Gastrocnemius medialis (tissue), 4 donors: ENCODE measurements at regions of chr15 and their contacts with region 1.

Region 1: GRCh38 chr15:75201609-75202250 is at the start of gene C15orf39:
- DNase-seq: peak; percentile 23 to 41
- ATAC-seq: peak; percentile 76 to 77
- H3K4me3 ChIP-seq: peak within 1 kb of the TSS; percentile 78 to 92 (median 83)
- H3K27ac ChIP-seq: peak within 1 kb of the TSS; percentile 82 to 87 (median 83)
- H3K4me1 ChIP-seq: peaks cover 7 to 16% of the 10 kb centered on the region in 2 donors
- H3K27me3 ChIP-seq: no peaks in the 10 kb centered on the region
- CTCF ChIP-seq: peak in 4 of 5 experiments; percentile 94 to 99 (median 96)
- POLR2A ChIP-seq: peak; percentile 87 to 92
- total RNA-seq, gene C15orf39: 1.6 to 3.8 (median 2.6) TPM

Region 2: GRCh38 chr15:74635228-74635627 is 566.5 kb before region 1 on chr15:
- in situ Hi-C with region 1: no loop called
- intact Hi-C with region 1: loop called (anchors 10 kb)
- DNase-seq: peak in 1 of 2 donors; percentile 51
- ATAC-seq: peak; percentile 64 to 73
- H3K4me3 ChIP-seq: no peak overlapping the region
- H3K27ac ChIP-seq: no peak overlapping the region
- H3K4me1 ChIP-seq: peaks cover 0 to 4% of the 10 kb centered on the region in 2 donors
- H3K27me3 ChIP-seq: no peaks in the 10 kb centered on the region
- CTCF ChIP-seq: peak; percentile 83 to 89 (median 85)
- POLR2A ChIP-seq: no peak

Region 3: GRCh38 chr15:74956648-74957300 is 245.0 kb before region 1 on chr15 and contains the start of gene RPP25:
- in situ Hi-C with region 1: no loop called
- intact Hi-C with region 1: loop called (anchors 1 kb)
- DNase-seq: peak; percentile 44 to 53
- ATAC-seq: peak; percentile 83 to 87
- H3K4me3 ChIP-seq: peak within 1 kb of the TSS; percentile 58 to 76 (median 68)
- H3K27ac ChIP-seq: peak within 1 kb of the TSS; percentile 67 to 74 (median 72)
- H3K4me1 ChIP-seq: peaks cover 15 to 25% of the 10 kb centered on the region in 2 donors
- H3K27me3 ChIP-seq: peaks cover 46 to 50% (median 49%) of the 10 kb centered on the region in 3 donors
- CTCF ChIP-seq: no peak
- POLR2A ChIP-seq: peak; percentile 54 to 75
- total RNA-seq, gene RPP25: 1.0 to 5.1 (median 1.9) TPM

Region 4: DNA sequence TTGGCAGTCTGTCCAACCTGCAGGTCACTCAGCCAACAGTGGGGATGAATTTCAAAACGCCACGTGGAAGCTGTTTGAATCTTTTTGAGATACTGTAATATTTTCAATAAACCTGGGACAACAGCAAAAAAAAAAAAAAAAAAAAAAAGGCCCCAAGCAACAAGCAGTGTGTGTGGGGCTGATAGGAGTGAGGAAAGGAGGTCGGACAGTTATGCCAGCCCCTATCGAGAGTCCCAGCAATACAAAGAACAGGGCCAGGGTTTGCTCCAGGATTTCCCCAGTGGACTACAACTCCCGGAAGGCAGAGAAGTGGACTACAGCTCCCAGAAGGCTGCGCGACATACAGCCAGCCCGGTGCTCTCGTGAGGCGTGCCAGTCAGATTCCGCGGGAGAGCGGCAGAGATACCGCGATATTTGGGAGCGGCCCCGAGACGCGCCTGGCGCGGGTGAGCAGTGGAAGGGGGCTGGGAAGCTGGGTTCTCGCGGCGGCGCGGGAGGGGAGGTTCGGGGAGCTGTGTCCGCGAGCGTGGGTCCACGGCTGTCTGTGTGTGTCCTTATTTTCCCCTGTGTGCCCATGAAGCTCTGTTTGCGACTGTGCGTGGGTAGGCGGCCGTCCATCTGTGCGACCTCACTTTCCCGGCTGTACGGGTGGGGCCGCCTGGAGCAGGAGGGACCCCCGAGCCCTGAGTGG is 178.4 kb before region 1 on chr15 and contains the start of gene PPCDC:
- in situ Hi-C with region 1: loop called (anchors 5 to 10 kb)
- intact Hi-C with region 1: no loop called
- DNase-seq: peak; percentile 95
- ATAC-seq: peak; percentile 97 to 98
- H3K4me3 ChIP-seq: peak within 1 kb of the TSS; percentile 80 to 92 (median 84)
- H3K27ac ChIP-seq: peak within 1 kb of the TSS; percentile 88 to 96 (median 90)
- H3K4me1 ChIP-seq: peaks cover 0 to 14% of the 10 kb centered on the region in 2 donors
- H3K27me3 ChIP-seq: no peaks in the 10 kb centered on the region
- CTCF ChIP-seq: no peak
- POLR2A ChIP-seq: peak; percentile 82 to 87
- total RNA-seq, gene PPCDC: 5.5 to 20.2 (median 11.9) TPM

Region 5: DNA sequence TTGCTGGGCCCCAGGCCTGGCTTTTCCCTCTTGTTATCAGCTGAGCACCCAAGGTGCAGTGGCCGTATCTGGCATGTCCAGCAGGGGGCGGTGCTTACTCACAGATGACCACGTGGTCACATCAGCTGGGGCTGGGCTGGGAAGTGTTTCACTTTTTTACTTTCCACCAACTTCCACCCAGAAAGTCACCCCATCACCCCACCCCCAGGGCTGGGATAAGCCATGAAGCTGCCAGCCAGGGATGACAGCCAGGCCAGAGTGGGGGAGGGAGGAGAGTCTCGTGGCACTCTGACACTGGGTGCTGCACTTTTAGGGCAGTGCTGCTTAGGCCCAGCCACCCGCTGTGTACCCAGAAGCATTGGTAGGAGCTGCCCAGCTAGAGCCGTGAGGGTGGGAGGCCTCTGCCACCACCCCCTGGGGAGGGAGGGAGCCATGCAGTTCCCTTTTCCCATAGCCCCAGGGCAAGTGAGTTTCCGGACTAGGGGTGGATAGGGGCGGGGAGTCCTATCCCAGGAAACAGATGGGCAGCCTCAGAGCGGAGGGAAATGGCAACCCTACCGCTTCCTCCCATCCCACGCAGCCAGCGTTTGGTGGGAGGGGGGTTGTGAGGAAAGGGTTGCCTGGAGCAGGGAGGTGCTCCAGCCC is 172.2 kb before region 1 on chr15:
- in situ Hi-C with region 1: loop called (anchors 5 to 10 kb)
- intact Hi-C with region 1: loop called (anchors 1 kb)
- DNase-seq: peak; percentile 80 to 84
- ATAC-seq: peak; percentile 83 to 84
- H3K4me3 ChIP-seq: peak overlapping the region; percentile 6 to 42 (median 32)
- H3K27ac ChIP-seq: peak overlapping the region; percentile 29 to 70 (median 62)
- H3K4me1 ChIP-seq: peaks cover 16 to 34% of the 10 kb centered on the region in 2 donors
- H3K27me3 ChIP-seq: no peaks in the 10 kb centered on the region
- CTCF ChIP-seq: peak; percentile 83 to 97 (median 94)
- POLR2A ChIP-seq: no peak

Region 6: GRCh38 chr15:75042730-75043508 is 158.8 kb before region 1 on chr15:
- in situ Hi-C with region 1: no loop called
- intact Hi-C with region 1: loop called (anchors 1 kb)
- DNase-seq: peak in 1 of 2 donors; percentile 60
- ATAC-seq: peak; percentile 18 to 28
- H3K4me3 ChIP-seq: no peak overlapping the region
- H3K27ac ChIP-seq: peak overlapping the region; percentile 71 to 80 (median 78)
- H3K4me1 ChIP-seq: peaks cover 61 to 64% of the 10 kb centered on the region in 2 donors
- H3K27me3 ChIP-seq: no peaks in the 10 kb centered on the region
- CTCF ChIP-seq: peak in 3 of 5 experiments; percentile 22 to 36 (median 26)
- POLR2A ChIP-seq: no peak

Region 7: GRCh38 chr15:75347222-75347878 is 145.6 kb after region 1 on chr15:
- in situ Hi-C with region 1: no loop called
- intact Hi-C with region 1: no loop called
- DNase-seq: peak in 1 of 2 donors; percentile 44
- ATAC-seq: peak; percentile 70 to 80
- H3K4me3 ChIP-seq: peak overlapping the region; percentile 73 to 95 (median 92)
- H3K27ac ChIP-seq: peak overlapping the region; percentile 60 to 85 (median 78)
- H3K4me1 ChIP-seq: peaks cover 7 to 14% of the 10 kb centered on the region in 2 donors
- H3K27me3 ChIP-seq: no peaks in the 10 kb centered on the region
- CTCF ChIP-seq: peak in 1 of 5 experiments; percentile 12
- POLR2A ChIP-seq: no peak